Head of caudate nucleus (tissue), 42 donors: ENCODE measurements at regions of chr7 and their contacts with region 1.

Region 1: GRCh38 chr7:98168181-98168905 is 42.9 kb upstream of the BHLHA15 start:
- DNase-seq: peak in 41 of 42 donors; percentile 34 to 88 (median 70)

Region 2: GRCh38 chr7:98021588-98022351 is 146.6 kb before region 1 on chr7:
- intact Hi-C with region 1: loop called (anchors 5 kb)
- DNase-seq: peak; percentile 66 to 94 (median 88)

Region 3: DNA sequence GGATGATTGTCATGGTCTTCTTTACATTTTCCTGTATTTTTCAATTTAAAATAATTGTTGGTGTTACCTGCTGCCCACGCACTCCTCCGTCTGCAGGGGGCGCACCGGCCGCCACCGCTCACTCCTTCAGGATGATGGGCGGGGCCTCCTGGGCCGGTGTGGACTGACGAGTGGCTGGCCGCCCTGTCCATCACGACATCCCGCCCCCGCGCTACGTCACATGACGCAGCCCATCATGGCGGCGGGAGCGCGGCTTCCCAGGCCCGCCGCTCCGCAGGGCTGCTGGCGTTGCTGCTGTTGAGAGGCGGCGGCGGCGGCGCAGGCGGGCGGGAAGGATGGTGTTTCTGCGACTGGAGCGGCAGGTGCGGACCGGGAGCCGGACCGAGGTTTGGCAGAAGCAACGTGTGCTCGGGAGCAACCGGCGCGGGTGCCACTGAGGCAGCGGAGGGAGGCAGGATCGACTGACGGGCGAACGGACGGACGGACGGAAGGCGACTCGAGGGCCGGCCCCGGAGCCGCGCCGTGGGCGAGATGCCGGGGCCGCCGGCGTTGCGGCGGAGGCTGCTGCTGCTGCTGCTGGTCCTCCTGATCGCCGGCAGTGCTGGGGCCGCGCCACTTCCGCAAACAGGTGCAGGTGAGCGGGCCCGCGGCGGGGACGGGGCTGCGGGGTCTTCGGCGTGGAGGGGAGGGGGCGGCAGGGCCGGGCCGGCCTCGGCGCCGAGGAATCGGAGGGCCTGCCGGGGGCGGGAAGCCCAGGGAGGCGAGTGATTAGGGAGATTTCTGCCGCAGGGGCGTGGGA is 61.5 kb before region 1 on chr7 and contains the start of gene LMTK2:
- intact Hi-C with region 1: loop called (anchors 5 kb)
- DNase-seq: peak; percentile 90 to 98 (median 96)

Region 4: GRCh38 chr7:98211221-98211675 is 42.9 kb after region 1 on chr7 and contains the start of gene BHLHA15:
- intact Hi-C with region 1: no loop called
- DNase-seq: peak in 9 of 42 donors; percentile 3 to 40 (median 19)

Region 5: DNA sequence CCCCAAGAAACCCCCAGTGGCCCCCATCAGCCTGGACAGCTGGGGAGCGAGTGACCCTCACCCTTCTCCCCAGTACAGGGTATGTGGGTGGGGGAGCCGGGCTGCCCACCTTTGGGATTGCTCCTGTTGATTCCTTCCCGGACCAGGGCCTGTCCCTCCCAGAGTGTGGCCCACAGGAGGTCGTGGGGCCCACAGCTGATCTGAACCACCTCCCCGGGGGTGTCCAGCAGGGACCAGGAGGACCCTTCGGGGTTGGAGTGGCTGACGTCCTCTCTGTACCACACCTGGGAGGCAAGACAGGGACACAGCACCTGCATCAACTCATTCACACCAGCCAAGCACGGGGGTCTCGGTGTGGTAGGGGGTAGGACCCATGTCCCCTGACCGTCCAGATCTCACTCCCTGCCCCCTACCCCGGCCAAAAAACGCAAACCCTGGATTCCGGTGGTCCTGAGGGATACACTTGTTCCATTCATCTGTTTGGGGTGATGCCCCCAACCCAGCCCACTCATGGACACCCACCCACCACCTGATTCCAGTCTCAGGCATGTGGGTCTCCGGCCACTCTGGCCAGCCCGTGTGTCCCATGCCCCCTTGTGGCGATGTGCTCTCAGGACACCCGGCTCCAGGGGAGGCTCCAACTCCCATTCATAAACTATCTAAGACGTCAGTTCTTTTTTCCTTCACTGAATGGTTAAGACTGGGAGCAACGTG is 72.8 kb after region 1 on chr7:
- intact Hi-C with region 1: no loop called
- DNase-seq: peak in 39 of 42 donors; percentile 9 to 79 (median 48)